Stomach (tissue), 19 donors: ENCODE measurements at regions of chr5 and their contacts with region 1.

Region 1: GRCh38 chr5:158695595-158696330 is 404.0 kb downstream of the EBF1 start:
- DNase-seq: peak; percentile 79 to 88
- H3K4me3 ChIP-seq: no peak overlapping the region
- H3K27ac ChIP-seq: no peak overlapping the region
- H3K4me1 ChIP-seq: peaks cover 0 to 3% (median 1%) of the 10 kb centered on the region in 4 donors
- H3K27me3 ChIP-seq: peaks cover 0 to 24% (median 0%) of the 10 kb centered on the region in 3 donors
- CTCF ChIP-seq: peak in 5 of 7 experiments; percentile 87 to 99 (median 96)
- EP300 ChIP-seq: no peak
- POLR2A ChIP-seq: no peak

Region 2: GRCh38 chr5:158174918-158175851 is 520.6 kb before region 1 on chr5:
- intact Hi-C with region 1: loop called (anchors 10 kb)
- DNase-seq: peak; percentile 67 to 92
- H3K4me3 ChIP-seq: no peak overlapping the region
- H3K27ac ChIP-seq: no peak overlapping the region
- H3K4me1 ChIP-seq: peaks cover 6 to 21% (median 15%) of the 10 kb centered on the region in 4 donors
- H3K27me3 ChIP-seq: peaks cover 0 to 3% (median 0%) of the 10 kb centered on the region in 3 donors
- CTCF ChIP-seq: peak in 5 of 7 experiments; percentile 45 to 60 (median 56)
- EP300 ChIP-seq: no peak
- POLR2A ChIP-seq: no peak